Psoas muscle (tissue), 8 donors: ENCODE measurements at regions of chr11 and their contacts with region 1.

Region 1: DNA sequence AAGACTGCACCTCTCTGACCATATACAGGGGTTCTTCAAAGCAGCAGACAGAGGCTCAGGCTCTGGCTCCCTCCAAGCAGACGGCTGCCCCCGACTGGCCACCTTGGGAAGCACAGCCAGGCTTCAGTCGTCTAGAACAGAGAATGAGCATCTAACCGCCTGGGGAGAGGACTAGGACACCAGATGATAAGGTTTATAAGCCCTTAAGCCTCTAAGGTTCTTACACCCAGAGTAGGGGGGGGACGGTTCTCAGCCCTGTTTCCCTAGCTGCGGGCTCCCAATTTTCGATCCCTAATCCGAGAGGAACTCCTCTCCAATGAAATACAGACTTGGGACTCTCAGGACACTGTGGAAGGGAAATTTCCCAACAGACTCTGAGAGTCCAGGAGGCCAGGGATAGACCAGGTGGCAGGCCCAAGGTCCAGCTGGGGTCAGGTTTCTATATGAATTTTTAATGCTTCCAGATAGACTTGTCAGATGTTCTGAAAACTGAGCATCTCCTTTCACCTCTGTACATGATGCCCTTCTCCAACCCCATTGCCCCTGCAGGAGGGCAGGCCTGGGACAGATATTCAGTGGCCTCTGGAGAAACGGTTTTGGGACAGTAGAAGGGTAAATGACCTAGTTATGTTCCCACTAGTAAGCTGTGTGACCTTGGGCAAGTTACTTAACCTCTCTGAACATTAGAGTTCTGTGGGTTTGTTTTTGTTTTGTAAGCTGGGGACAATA is 20.2 kb downstream of the RTN4RL2 start:
- DNase-seq: peak; percentile 66 to 82
- ATAC-seq: peak; percentile 31 to 46 (median 36)
- H3K4me3 ChIP-seq: no peak overlapping the region
- H3K27ac ChIP-seq: no peak overlapping the region
- H3K4me1 ChIP-seq: peaks cover 10% of the 10 kb centered on the region
- H3K27me3 ChIP-seq: peaks cover 0 to 6% (median 5%) of the 10 kb centered on the region in 3 donors
- CTCF ChIP-seq: peak; percentile 68

Region 2: DNA sequence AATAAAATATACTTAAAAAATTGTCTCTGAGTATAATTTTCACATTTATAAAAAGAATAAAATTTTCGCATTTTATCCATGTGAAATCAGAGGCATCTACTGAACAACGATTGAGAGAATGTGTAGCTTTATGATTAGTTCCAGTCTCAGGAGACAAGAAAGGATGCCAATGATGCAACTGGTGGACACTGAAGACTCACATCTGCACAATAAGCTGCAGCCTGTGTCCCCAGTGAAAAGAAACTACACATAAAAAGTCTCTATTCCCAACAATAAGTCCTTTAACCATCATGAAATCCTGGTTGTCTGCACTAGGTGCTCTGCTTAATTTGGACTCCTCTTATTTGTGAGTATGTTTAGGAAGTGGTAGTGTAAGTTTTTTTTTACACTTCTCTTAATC is 1431.1 kb before region 1 on chr11:
- intact Hi-C with region 1: no loop called
- DNase-seq: no peak
- ATAC-seq: no peak
- H3K4me3 ChIP-seq: no peak overlapping the region
- H3K27ac ChIP-seq: no peak overlapping the region
- H3K4me1 ChIP-seq: no peaks in the 10 kb centered on the region
- H3K27me3 ChIP-seq: no peaks in the 10 kb centered on the region
- CTCF ChIP-seq: no peak

Region 3: DNA sequence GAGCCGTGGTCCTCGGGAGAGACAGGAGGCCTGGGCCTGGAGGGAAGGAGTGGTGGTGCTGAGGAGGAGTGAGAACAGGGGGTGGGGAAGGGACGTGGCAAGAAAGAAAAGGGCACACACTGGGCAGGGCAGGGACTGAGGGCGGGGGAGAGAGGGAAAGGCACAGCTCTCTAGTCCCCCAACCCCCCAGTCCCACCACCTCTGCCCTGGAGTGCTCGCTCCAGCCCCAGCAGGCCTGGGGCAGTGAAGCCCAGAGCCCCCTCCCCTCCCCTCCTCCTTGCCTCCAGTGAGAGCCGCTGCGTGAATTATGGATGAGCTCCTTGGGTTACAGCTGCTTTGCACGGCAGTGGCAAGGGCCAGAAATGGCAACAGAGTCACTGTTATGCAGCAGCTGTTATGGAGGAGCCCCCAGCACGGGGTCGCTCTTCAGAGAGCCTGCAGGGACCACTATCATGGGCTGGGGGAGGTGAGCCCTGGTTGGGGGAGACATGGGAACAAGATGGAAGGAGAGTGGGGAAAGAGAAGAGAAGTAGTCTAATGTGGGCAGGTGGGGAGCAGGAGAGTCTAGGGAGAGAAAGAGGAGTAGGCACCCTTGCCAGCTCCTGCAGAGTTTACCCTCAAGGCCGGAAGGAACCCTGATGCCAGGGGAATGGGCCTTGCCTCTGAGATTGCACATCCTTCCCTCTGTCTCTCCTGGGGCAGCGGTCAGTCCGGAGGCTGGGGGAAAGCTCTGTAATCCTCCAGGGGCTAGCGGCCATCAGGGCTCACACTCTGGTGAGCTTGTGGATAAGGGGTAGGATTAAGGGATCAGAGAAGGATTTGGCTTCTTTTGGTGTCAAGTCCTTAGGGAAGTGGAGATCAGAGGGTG is 16.7 kb before region 1 on chr11:
- intact Hi-C with region 1: loop called in 1 of 2 experiments (anchors 2 kb)
- DNase-seq: no peak
- ATAC-seq: no peak
- H3K4me3 ChIP-seq: no peak overlapping the region
- H3K27ac ChIP-seq: no peak overlapping the region
- H3K4me1 ChIP-seq: peaks cover 12% of the 10 kb centered on the region
- H3K27me3 ChIP-seq: peaks cover 0 to 34% (median 22%) of the 10 kb centered on the region in 3 donors
- CTCF ChIP-seq: no peak